RWPE1 (cell line): ENCODE measurements at regions of chr11 and their contacts with region 1.

Region 1: GRCh38 chr11:60899046-60899936 is 7.1 kb downstream of the PRPF19 start:
- DNase-seq: peak; percentile 52
- H3K27ac ChIP-seq: no peak overlapping the region
- CTCF ChIP-seq: peak; percentile 97

Region 2: DNA sequence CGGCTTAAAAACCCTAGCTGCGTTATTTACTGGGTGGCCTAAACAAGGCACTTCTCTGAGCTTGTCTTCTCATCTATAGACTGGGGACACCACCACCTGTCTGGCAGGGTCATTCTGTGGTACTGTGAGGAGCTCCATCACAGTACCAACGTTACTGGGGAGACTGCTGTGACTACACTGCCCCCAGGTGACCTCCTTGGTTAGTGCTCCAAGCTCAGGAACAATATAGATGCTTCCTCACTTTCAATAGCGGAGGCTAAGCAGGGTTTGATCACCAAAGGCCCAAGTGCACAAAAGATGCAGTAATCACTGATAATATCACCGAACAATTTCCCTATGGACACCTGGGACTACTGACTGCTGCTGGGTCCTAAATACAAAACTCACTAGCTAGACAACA is 11.7 kb before region 1 on chr11:
- CTCF ChIA-PET with region 1: interaction called, 10 read pairs
- POLR2A ChIA-PET with region 1: interaction called, 3 read pairs
- DNase-seq: no peak
- H3K27ac ChIP-seq: no peak overlapping the region
- CTCF ChIP-seq: no peak; the same call in 1 of the 2 replicates